ENCODE measurements at regions of chr4 and their contacts with region 1.

Region 1: DNA sequence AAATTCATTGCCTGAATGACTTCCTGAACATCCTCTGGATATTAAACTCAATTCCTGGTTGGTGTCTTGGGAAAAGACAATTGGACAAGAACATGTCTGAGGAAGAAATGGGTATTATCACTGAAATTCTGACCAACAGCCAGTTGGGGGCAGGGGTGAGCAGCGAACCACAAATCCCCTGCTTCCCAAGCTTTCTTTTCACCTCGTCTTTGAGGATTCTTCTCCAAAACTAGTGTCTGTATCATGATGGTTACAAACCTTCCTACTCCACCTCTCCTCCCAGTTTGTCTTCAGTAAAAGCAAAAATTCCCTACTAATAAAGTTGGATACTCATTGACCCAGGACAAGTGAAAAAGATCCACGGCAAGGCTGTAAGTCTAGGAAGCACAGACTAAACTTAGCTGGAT is 48.3 kb upstream of the WDR1 start:
- DNase-seq: peak; percentile 63
- H3K4me3 Mint-ChIP-seq: no peak overlapping the region
- H3K27ac Mint-ChIP-seq: no peak overlapping the region
- H3K4me1 Mint-ChIP-seq: peaks cover 6% of the 10 kb centered on the region
- H3K27me3 Mint-ChIP-seq: no peaks in the 10 kb centered on the region
- CTCF ChIP-seq: peak; percentile 54

Region 2: DNA sequence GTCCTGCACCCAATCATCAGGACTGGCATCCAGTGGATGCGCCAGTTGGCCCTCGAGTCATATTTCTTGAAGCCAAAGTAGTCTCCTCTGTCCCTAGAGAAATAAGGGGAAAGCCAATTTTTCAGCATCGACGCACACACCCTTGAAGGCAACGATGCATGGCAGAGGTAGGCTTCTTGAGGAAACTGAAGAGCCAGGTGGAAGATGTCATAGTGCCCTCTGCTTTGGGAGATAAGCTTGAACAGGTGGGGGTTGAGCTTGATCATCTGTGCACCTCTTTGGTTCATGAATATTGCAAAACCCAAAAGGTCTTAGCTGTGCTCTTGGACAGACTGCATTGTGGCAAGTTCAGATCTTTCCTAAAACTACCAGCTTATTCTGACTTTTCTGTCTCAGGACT is 13.7 kb before region 1 on chr4:
- CTCF ChIA-PET with region 1: interaction called, 17 read pairs
- POLR2A ChIA-PET with region 1: no interaction called
- intact Hi-C with region 1: no loop called
- DNase-seq: no peak
- H3K4me3 Mint-ChIP-seq: no peak overlapping the region
- H3K27ac Mint-ChIP-seq: no peak overlapping the region
- H3K4me1 Mint-ChIP-seq: no peaks in the 10 kb centered on the region
- H3K27me3 Mint-ChIP-seq: no peaks in the 10 kb centered on the region
- CTCF ChIP-seq: no peak

Region 3: GRCh38 chr4:10180927-10181782 is 16.3 kb after region 1 on chr4:
- CTCF ChIA-PET with region 1: interaction called, 13 read pairs
- POLR2A ChIA-PET with region 1: no interaction called
- intact Hi-C with region 1: no loop called
- DNase-seq: peak; percentile 14
- H3K4me3 Mint-ChIP-seq: no peak overlapping the region
- H3K27ac Mint-ChIP-seq: no peak overlapping the region
- H3K4me1 Mint-ChIP-seq: no peaks in the 10 kb centered on the region
- H3K27me3 Mint-ChIP-seq: no peaks in the 10 kb centered on the region
- CTCF ChIP-seq: no peak

Region 4: DNA sequence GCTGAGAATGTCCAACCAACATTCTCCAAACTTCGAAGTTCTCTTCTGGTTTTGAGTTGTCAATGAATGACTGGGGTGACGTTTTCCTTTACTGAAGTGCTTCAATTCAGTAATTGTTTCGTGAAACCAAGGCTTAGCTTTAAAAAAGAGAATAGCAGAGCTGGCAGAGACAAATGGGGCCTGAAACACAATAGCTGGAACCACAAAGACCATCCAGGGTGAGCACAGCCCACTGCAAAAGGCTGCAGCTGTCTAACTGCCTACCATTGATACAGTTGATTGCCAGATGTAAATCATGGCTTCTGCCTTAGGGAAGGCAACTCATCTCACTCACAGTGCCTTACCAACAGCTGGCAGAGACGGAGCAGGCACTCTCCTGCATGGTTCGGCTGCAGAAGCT is 371.0 kb after region 1 on chr4:
- CTCF ChIA-PET with region 1: interaction called, 40 read pairs
- POLR2A ChIA-PET with region 1: no interaction called
- intact Hi-C with region 1: loop called (anchors 1 kb)
- DNase-seq: no peak
- H3K4me3 Mint-ChIP-seq: no peak overlapping the region
- H3K27ac Mint-ChIP-seq: no peak overlapping the region
- H3K4me1 Mint-ChIP-seq: peaks cover 2% of the 10 kb centered on the region
- H3K27me3 Mint-ChIP-seq: no peaks in the 10 kb centered on the region
- CTCF ChIP-seq: no peak